Activated CD4-positive, alpha-beta memory T cell treated with anti-CD3 and anti-CD28 coated beads, Interleukin-2, amount 10 ng/mL, durations not matched to agents 7 days and 5 days (primary cell): ENCODE measurements at regions of chr2 and their contacts with region 1.

Region 1: GRCh38 chr2:98487806-98488651 is 43.4 kb downstream of the INPP4A start:
- DNase-seq: peak; percentile 49
- H3K4me3 Mint-ChIP-seq: no peak overlapping the region
- H3K27ac Mint-ChIP-seq: peak overlapping the region; percentile 27
- H3K4me1 Mint-ChIP-seq: peaks cover 81% of the 10 kb centered on the region
- H3K27me3 Mint-ChIP-seq: no peaks in the 10 kb centered on the region

Region 2: GRCh38 chr2:98444436-98445176 is 43.4 kb before region 1 on chr2 and contains the start of gene INPP4A:
- CTCF ChIA-PET with region 1: interaction called, 18 read pairs
- POLR2A ChIA-PET with region 1: interaction called, 500 read pairs
- DNase-seq: peak; percentile 81
- H3K4me3 Mint-ChIP-seq: peak within 1 kb of the TSS; percentile 88
- H3K27ac Mint-ChIP-seq: peak within 1 kb of the TSS; percentile 92
- H3K4me1 Mint-ChIP-seq: peaks cover 52% of the 10 kb centered on the region
- H3K27me3 Mint-ChIP-seq: no peaks in the 10 kb centered on the region
- total RNA-seq, gene INPP4A: 123 to 127 TPM

Region 3: DNA sequence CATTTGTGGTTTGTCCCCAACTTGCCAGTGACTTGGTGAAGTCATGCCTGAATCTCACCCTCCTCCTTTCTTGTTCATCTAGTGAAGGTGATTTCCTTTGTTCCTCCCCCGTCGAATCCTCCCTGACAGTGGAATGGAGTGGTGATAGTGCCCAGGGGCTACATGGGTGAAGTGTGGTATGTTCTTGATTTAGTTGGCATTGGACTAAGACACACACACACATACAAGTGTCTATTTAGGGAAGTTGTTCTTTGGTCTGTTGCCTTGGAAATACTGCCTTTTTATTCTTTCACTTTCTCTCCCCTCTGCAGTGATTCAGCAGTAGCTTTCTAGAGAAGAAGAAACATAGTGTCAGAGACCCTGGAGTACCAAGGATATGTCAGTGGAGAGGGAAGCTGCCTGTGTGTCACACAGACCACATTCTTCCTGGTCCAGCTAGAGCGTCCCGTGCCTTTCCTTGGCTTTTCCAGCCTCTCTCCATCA is 32.5 kb before region 1 on chr2:
- CTCF ChIA-PET with region 1: interaction called, 14 read pairs
- POLR2A ChIA-PET with region 1: interaction called, 500 read pairs
- DNase-seq: no peak
- H3K4me3 Mint-ChIP-seq: peak overlapping the region; percentile 61
- H3K27ac Mint-ChIP-seq: peak overlapping the region; percentile 85
- H3K4me1 Mint-ChIP-seq: peaks cover 97% of the 10 kb centered on the region
- H3K27me3 Mint-ChIP-seq: no peaks in the 10 kb centered on the region

Region 4: DNA sequence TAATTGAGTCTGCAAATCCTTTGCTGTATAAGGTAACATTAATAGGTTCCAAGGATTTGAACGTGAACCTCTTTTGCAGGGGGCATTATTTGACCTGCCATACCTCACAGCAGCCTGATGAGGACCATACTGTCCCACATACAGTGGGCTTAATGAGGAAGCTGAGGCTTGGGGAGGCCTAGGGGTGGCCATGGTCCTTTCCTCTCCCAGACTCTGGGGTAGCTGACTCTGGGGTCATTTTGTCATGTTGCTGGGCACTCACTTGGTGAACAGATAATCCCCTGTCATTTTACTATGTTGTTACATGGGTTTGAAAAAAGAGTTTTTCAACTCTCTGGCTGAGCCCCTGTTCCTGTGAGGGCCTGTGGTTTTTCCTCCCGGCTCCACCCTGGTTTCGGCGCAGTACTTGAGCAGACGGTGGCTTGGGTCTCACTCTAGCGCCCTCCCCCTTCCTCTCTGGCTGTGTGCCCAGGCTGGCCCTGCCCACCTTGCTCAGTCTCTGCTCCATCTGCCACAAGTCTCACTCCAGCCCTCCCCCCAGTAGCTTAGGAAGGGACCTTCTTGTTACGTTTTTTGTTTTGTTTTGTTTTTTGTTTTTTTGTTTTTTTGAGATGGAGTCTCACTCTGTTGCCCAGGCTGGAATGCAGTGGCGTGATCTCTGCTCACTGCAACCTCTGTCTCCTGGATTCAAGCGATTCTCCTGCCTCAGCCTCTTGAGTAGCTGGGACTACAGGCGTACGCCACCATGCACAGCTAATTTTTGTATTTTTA is 22.4 kb before region 1 on chr2:
- CTCF ChIA-PET with region 1: interaction called, 13 read pairs
- POLR2A ChIA-PET with region 1: interaction called, 500 read pairs
- DNase-seq: peak; percentile 85
- H3K4me3 Mint-ChIP-seq: peak overlapping the region; percentile 72
- H3K27ac Mint-ChIP-seq: peak overlapping the region; percentile 100
- H3K4me1 Mint-ChIP-seq: peaks cover 93% of the 10 kb centered on the region
- H3K27me3 Mint-ChIP-seq: no peaks in the 10 kb centered on the region

Region 5: GRCh38 chr2:98505311-98505808 is 17.3 kb after region 1 on chr2:
- CTCF ChIA-PET with region 1: interaction called, 13 read pairs
- POLR2A ChIA-PET with region 1: interaction called, 4 read pairs
- DNase-seq: peak; percentile 49
- H3K4me3 Mint-ChIP-seq: no peak overlapping the region
- H3K27ac Mint-ChIP-seq: peak overlapping the region; percentile 70
- H3K4me1 Mint-ChIP-seq: peaks cover 75% of the 10 kb centered on the region
- H3K27me3 Mint-ChIP-seq: no peaks in the 10 kb centered on the region

Region 6: GRCh38 chr2:98515250-98515991 is 27.4 kb after region 1 on chr2:
- CTCF ChIA-PET with region 1: interaction called, 10 read pairs
- POLR2A ChIA-PET with region 1: interaction called, 5 read pairs
- DNase-seq: no peak
- H3K4me3 Mint-ChIP-seq: no peak overlapping the region
- H3K27ac Mint-ChIP-seq: peak overlapping the region; percentile 12
- H3K4me1 Mint-ChIP-seq: peaks cover 61% of the 10 kb centered on the region
- H3K27me3 Mint-ChIP-seq: no peaks in the 10 kb centered on the region